HEK293 (cell line): ENCODE measurements at regions of chr1 and their contacts with region 1.

Region 1: DNA sequence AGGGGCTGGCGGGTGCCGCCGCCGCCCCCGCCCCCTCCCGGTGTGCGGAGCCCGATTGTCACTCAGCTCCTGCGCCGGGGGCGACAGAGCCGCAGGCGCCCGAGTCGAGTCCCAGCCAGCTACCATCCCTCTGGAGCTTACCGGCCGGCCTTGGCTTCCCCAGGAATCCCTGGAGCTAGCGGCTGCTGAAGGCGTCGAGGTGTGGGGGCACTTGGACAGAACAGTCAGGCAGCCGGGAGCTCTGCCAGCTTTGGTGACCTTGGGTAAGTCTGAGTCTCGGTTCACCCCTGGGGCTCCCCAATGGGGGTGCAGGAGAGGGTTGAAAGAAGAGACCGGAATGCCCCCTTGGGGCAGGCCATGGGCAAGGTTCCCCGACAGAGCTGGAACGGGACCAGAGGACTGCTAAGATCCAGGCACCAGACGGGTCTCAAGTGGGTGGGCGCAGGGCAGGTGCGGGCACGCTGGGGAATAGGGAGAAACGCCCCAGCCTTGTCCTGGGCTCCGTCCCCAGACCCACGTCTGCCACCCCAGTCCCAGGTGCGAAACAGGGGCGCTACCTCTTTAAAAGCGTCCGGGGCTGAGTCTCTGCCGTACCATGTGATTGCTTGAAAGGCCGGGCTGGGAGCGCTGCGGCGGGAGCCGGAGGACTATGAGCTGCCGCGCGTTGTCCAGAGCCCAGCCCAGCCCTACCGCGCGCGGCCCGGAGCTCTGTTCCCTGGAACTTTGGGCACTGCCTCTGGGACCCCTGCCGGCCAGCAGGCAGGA is at the start of gene ADORA1:
- H3K4me3 ChIP-seq: peak within 1 kb of the TSS; percentile 43
- H3K27ac ChIP-seq: peak within 1 kb of the TSS; percentile 42; the same call in 1 of the 2 replicates
- H3K4me1 ChIP-seq: no peaks in the 10 kb centered on the region
- CTCF ChIP-seq: no peak; the same call in none of the 2 replicates

Region 2: GRCh38 chr1:203140743-203141520 is 13.1 kb after region 1 on chr1:
- CTCF ChIA-PET with region 1: interaction called, 4 read pairs
- POLR2A ChIA-PET with region 1: interaction called, 13 read pairs
- H3K4me3 ChIP-seq: no peak overlapping the region
- H3K27ac ChIP-seq: no peak overlapping the region
- H3K4me1 ChIP-seq: peaks cover 2% of the 10 kb centered on the region; the same call in 1 of the 2 replicates
- CTCF ChIP-seq: no peak

Region 3: DNA sequence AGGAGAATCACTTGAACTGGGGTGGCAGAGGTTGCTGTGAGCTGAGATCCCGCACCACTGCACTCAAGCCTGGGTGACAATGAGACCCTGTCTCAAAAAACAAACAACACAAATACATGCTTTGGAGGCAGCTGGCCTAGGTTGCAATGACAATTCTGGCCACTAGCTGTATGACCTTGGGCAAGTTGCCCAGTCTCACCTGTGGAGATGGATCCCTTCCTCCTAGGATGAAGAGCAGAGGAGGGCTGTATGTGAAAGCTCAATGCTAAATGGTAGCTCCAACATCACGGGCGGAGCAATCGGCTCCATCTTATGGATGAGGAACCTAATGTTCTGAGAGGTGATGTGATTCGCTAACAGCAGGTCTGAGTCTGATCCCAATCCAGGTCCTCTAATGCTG is 20.3 kb after region 1 on chr1:
- CTCF ChIA-PET with region 1: interaction called, 13 read pairs
- POLR2A ChIA-PET with region 1: interaction called, 5 read pairs
- H3K4me3 ChIP-seq: no peak overlapping the region
- H3K27ac ChIP-seq: no peak overlapping the region
- H3K4me1 ChIP-seq: no peaks in the 10 kb centered on the region; the same call in 1 of the 2 replicates
- CTCF ChIP-seq: no peak